ENCODE measurements at regions of chr11 and their contacts with region 1.

Region 1: DNA sequence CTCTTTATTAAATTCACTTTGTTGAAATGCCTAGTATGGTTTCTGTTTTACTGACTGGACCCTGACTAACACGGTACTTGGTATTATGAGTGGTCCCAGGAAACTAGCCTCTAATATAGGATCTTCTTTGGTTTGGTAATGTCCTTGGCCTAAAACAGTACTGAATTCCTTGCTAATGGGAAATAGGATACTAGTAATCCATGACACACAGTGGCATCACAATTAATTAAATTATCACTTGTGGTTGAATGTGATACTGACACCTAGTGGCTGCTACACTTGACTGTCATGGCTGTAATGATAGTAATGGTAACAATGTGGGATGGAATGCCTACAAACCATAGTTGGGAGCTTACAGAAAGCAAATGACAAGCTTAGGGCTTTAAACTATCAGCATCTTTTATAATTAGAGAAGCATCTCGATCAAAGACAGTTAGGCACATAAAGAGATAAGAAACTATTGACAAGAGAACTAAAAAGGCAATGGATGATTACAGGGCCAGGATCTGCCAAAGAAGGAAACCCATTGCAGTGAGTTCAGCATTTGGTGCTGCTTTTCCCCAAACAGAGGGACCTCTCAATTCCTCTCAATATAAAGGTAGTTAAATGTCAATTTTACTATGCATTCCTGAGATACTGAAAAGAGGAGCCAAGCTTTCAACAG is 8.6 kb downstream of the DNHD1 start:
- DNase-seq: no peak
- H3K4me3 ChIP-seq: no peak overlapping the region
- H3K27ac ChIP-seq: no peak overlapping the region
- H3K4me1 ChIP-seq: no peaks in the 10 kb centered on the region
- H3K27me3 ChIP-seq: no peaks in the 10 kb centered on the region
- CTCF ChIP-seq: peak in 2 of 3 donors; percentile 23 to 47
- EP300 ChIP-seq: no peak
- POLR2A ChIP-seq: no peak

Region 2: GRCh38 chr11:6377902-6378639 is 127.6 kb before region 1 on chr11:
- intact Hi-C with region 1: loop called in 2 of 4 experiments (anchors 5 to 10 kb)
- DNase-seq: no peak
- H3K4me3 ChIP-seq: no peak overlapping the region
- H3K27ac ChIP-seq: no peak overlapping the region
- H3K4me1 ChIP-seq: no peaks in the 10 kb centered on the region
- H3K27me3 ChIP-seq: no peaks in the 10 kb centered on the region
- CTCF ChIP-seq: no peak
- EP300 ChIP-seq: no peak
- POLR2A ChIP-seq: no peak

Measured in ovary (tissue), 10 donors.